Psoas muscle (tissue), 8 donors: ENCODE measurements at regions of chr20 and their contacts with region 1.

Region 1: GRCh38 chr20:54097236-54097529 is 26.8 kb upstream of the BCAS1 start:
- DNase-seq: no peak
- ATAC-seq: no peak
- H3K4me3 ChIP-seq: no peak overlapping the region
- H3K27ac ChIP-seq: no peak overlapping the region
- H3K4me1 ChIP-seq: no peaks in the 10 kb centered on the region
- H3K27me3 ChIP-seq: peaks cover 0 to 7% (median 0%) of the 10 kb centered on the region in 3 donors
- CTCF ChIP-seq: no peak

Region 2: DNA sequence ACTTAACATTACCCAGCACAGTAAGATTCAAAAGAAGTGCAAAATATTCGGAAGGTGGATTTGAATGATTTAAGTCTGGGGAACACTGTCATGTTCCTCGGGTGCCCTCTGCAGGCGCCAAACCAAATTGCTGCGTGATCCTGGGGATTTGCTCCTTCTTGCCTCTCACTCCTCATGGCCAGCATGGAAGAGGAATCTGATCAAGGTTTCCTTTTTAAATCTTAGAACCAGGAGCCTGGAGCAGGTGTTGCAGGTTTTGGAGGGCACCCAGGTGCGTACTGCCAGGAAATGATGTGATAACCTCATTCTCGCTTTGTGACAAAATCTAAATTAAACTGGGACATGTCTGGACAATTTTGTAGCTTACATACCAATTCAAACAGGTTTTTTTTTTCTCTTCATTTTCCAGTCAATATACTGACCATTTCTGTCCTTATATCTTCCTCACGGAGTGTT is 102.6 kb after region 1 on chr20:
- intact Hi-C with region 1: loop called (anchors 2 kb)
- DNase-seq: peak; percentile 67 to 79
- ATAC-seq: peak; percentile 64 to 84 (median 67)
- H3K4me3 ChIP-seq: no peak overlapping the region
- H3K27ac ChIP-seq: no peak overlapping the region
- H3K4me1 ChIP-seq: no peaks in the 10 kb centered on the region
- H3K27me3 ChIP-seq: no peaks in the 10 kb centered on the region
- CTCF ChIP-seq: peak; percentile 92

Region 3: GRCh38 chr20:54382422-54382821 is 285.2 kb after region 1 on chr20:
- intact Hi-C with region 1: no loop called
- DNase-seq: no peak
- ATAC-seq: no peak
- H3K4me3 ChIP-seq: no peak overlapping the region
- H3K27ac ChIP-seq: no peak overlapping the region
- H3K4me1 ChIP-seq: no peaks in the 10 kb centered on the region
- H3K27me3 ChIP-seq: no peaks in the 10 kb centered on the region
- CTCF ChIP-seq: no peak